ENCODE measurements at regions of chr2 and their contacts with region 1.

Region 1: DNA sequence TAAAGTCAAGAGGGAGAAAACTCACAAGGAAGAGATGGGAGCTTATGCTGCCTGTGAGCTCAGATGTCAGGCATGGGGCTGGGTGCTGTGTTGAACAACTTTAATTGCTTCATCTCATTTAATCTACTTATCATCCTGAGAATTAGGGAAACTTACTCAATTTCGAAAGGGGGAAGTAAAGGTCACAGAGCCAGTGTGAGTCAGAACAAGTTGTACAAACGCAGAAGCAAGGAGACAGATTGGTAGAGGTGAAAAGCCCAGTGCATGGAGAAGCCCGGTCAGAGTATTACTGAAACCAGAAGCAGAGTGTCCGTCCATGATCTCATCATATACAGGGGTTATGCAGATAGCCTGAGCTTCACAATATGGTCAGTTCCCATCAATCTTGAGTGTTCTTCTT is 281.1 kb upstream of the POU3F3 start:
- H3K4me3 Mint-ChIP-seq: no peak overlapping the region
- H3K27ac Mint-ChIP-seq: no peak overlapping the region
- H3K4me1 Mint-ChIP-seq: peaks cover 30% of the 10 kb centered on the region
- H3K27me3 Mint-ChIP-seq: no peaks in the 10 kb centered on the region

Region 2: GRCh38 chr2:104658144-104658835 is 85.5 kb after region 1 on chr2:
- intact Hi-C with region 1: loop called (anchors 5 kb)
- H3K4me3 Mint-ChIP-seq: peak overlapping the region; percentile 74
- H3K27ac Mint-ChIP-seq: no peak overlapping the region
- H3K4me1 Mint-ChIP-seq: peaks cover 17% of the 10 kb centered on the region
- H3K27me3 Mint-ChIP-seq: peaks cover 28% of the 10 kb centered on the region

Measured in dendritic cell treated with granulocyte-macrophage colony-stimulating factor and Interleukin-4, amounts not matched to agents 40 ng/mL and 50 ng/mL, for 4 days (primary cell).